ENCODE measurements at regions of chr6 and their contacts with region 1.

Region 1: DNA sequence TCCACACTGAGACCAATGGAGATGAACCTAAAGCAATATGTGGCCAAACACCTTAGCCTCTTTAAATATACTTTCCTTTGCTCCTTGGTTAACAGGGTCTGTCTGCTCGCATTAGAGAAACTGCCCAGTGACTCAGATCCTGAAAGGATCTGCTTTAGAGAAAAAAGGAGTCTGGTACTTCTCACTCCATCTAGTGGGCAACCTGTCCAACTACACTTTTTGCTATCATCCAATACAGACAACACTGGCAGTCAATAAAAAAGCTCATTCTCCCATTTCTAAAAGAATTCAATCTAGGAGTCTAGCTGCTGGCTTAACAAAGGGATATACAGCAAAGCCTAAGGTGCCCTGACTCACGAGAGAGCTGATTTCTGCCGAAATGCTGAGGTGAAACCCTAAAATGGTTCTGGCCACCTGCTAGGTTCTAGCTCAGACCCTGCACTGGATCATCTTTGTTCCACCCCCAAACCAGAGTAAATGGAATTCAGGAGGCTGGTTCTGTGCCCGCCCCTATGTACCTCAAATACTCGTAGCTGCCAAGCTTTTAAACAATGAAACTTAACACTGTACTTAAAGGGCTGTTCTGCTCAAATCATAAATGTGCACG is 11.5 kb downstream of the GNL1 start:
- DNase-seq: no peak
- H3K4me3 ChIP-seq: no peak overlapping the region
- H3K27ac ChIP-seq: peak overlapping the region; percentile 21
- H3K4me1 ChIP-seq: peaks cover 28% of the 10 kb centered on the region
- H3K27me3 ChIP-seq: no peaks in the 10 kb centered on the region
- CTCF ChIP-seq: peak; percentile 86

Region 2: GRCh38 chr6:29792123-29793035 is 752.4 kb before region 1 on chr6:
- intact Hi-C with region 1: no loop called
- DNase-seq: peak; percentile 77
- H3K4me3 ChIP-seq: peak overlapping the region; percentile 88
- H3K27ac ChIP-seq: peak overlapping the region; percentile 48
- H3K4me1 ChIP-seq: peaks cover 22% of the 10 kb centered on the region
- H3K27me3 ChIP-seq: peaks cover 51% of the 10 kb centered on the region
- CTCF ChIP-seq: peak; percentile 82

Region 3: DNA sequence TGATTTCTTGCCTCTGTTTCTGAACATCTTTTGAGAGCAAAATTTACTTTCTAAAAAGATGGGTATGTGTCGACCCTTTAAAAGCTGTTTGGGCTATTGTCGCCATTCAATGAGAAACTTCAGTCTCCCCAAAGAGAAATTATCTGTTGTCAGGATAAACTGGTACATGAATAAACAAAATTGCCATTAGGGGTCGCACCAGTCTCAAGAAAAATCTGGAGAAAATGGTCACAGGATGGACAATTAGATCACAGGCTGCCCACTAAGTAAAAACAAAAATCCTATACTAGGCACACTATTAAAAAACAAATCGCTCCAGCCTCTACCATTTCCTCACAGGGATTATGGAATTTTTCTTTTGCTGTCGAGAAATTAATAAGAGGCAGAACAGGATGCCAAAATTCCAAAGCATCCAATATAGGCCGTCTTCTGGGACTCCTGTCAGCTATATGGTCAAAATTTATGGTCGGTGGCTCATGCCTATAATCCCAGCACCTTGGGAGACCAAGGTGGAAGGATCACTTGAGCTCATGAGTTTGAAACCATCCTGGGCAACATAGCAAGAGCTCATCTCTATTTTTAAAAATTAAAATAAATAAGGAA is 61.0 kb before region 1 on chr6:
- intact Hi-C with region 1: loop called (anchors 2 kb)
- DNase-seq: no peak
- H3K4me3 ChIP-seq: no peak overlapping the region
- H3K27ac ChIP-seq: no peak overlapping the region
- H3K4me1 ChIP-seq: peaks cover 7% of the 10 kb centered on the region
- H3K27me3 ChIP-seq: peaks cover 44% of the 10 kb centered on the region
- CTCF ChIP-seq: peak; percentile 69

Region 4: DNA sequence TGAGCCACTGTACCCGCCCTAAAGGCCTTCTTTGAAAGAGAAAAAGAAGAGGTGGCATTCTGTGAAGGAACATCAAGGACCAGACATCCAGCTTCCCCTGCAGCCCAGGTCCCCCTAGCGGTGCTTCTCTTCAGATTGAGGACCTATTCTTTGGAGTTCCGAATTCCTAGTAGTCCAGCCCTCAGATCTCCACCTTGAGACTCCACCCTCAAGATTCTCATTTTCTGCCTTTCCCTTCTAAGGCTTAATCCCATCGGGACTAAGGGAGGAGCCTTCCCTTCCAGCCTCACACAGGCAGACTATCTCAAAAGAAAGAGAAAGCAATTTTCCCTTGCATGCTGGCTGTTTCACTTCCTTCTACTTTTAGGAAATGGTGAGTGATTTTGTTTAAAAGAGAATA is 498.0 kb after region 1 on chr6:
- intact Hi-C with region 1: no loop called
- DNase-seq: peak; percentile 23
- H3K4me3 ChIP-seq: no peak overlapping the region
- H3K27ac ChIP-seq: no peak overlapping the region
- H3K4me1 ChIP-seq: no peaks in the 10 kb centered on the region
- H3K27me3 ChIP-seq: peaks cover 9% of the 10 kb centered on the region
- CTCF ChIP-seq: peak; percentile 63